Psoas muscle (tissue), 8 donors: ENCODE measurements at regions of chr14 and their contacts with region 1.

Region 1: DNA sequence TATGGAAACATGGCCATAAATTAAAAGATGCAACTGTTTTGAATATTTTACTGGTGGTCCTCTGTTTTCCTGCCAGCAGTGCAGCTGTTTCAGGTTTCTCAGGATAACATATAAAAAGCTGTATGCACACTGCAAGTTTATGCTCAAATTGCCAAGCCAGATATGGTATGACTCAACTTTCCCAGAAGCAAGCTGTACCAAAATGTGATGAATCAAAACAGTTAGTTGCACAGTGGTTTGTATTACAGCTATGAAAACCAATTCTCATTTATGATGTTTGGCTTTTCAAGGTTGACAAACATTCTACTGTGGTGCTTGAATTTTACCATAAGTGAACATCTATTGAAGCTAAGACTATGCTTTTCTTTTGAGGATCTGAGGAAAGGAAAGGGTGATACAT is 15.5 kb downstream of the TRMT5 start:
- DNase-seq: no peak
- ATAC-seq: peak in 1 of 4 donors; percentile 44
- H3K4me3 ChIP-seq: no peak overlapping the region
- H3K27ac ChIP-seq: peak overlapping the region; percentile 37
- H3K4me1 ChIP-seq: peaks cover 69% of the 10 kb centered on the region
- H3K27me3 ChIP-seq: no peaks in the 10 kb centered on the region
- CTCF ChIP-seq: no peak

Region 2: DNA sequence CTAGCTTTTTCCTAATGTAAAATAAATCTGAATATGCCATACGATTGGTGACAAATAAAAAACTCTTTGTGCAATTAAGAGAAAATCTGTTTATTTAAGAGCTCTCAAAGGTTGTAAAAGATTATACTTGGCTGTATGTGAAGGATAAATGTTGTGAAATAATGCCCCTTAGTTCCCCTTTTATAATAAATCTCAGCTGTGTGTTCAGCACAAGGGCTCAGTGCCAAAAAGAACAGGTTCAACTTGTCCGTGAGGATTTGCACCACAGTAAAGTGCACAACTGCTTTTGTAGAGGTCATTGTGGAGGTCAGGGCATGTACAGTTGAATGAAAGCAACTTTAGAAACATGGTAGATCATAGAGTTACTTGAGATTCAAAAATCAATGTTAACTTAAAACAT is 103.1 kb before region 1 on chr14:
- intact Hi-C with region 1: loop called in 1 of 2 experiments (anchors 5 kb)
- DNase-seq: no peak
- ATAC-seq: peak; percentile 88 to 94 (median 90)
- H3K4me3 ChIP-seq: peak overlapping the region; percentile 20
- H3K27ac ChIP-seq: peak overlapping the region; percentile 74
- H3K4me1 ChIP-seq: peaks cover 56% of the 10 kb centered on the region
- H3K27me3 ChIP-seq: no peaks in the 10 kb centered on the region
- CTCF ChIP-seq: no peak

Region 3: GRCh38 chr14:61403411-61403810 is 438.0 kb after region 1 on chr14:
- intact Hi-C with region 1: no loop called
- DNase-seq: no peak
- ATAC-seq: no peak
- H3K4me3 ChIP-seq: no peak overlapping the region
- H3K27ac ChIP-seq: no peak overlapping the region
- H3K4me1 ChIP-seq: peaks cover 13% of the 10 kb centered on the region
- H3K27me3 ChIP-seq: no peaks in the 10 kb centered on the region
- CTCF ChIP-seq: no peak